CD14-positive monocyte (primary cell): ENCODE measurements at regions of chr14 and their contacts with region 1.

Region 1: DNA sequence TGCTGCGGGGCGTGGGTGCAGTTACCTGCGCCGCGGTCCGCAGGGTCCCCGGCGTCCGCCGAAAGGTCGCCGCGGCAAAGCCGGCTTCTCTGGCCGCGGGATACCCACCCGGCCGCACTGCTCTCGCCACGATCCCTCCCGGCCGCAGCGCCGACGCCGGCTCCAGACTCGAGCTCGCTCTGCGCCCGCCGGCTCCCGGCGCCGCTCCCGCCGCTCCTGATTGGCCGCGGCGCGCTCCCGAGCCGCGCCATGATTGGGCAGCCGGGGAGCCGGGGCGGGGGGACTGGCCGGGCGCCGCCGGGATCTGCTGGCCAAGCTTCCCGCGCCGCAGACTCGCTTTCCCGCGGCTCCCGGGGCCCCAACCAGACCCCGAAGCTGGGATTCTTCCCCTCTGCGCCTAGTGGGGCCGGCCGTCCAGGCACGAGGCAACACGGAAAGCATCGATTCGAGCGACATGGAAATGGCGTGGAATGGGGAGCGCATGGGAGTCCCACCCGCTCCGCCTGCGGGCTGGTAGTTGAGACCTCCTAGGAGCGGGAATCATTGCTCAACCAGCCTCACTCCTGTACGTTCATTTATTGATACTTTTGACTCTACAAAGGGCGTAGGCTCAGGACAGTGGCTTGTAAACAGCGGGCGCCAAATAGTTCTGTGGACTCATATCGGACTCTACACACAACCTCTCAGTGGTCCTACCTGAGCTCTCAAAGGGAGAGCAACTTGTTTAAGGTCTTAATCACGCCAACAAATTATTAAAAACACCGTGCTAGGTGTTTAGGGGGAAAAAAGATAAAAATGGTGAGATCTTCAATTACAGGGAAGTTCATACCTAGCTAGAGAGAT is 36.4 kb upstream of the STON2 start:
- DNase-seq: peak; percentile 29 to 65 (median 62)
- H3K4me3 ChIP-seq: peak overlapping the region; percentile 40 to 76 (median 49)
- H3K4me3 Mint-ChIP-seq: peak overlapping the region; percentile 72 to 89
- H3K27ac ChIP-seq: no peak overlapping the region
- H3K27ac Mint-ChIP-seq: no peak overlapping the region
- H3K4me1 ChIP-seq: peaks cover 15 to 18% of the 10 kb centered on the region in 2 donors
- H3K4me1 Mint-ChIP-seq: peaks cover 14% of the 10 kb centered on the region
- H3K27me3 ChIP-seq: peaks cover 84 to 86% of the 10 kb centered on the region in 2 donors
- H3K27me3 Mint-ChIP-seq: peaks cover 79 to 89% (median 80%) of the 10 kb centered on the region in 3 donors
- CTCF ChIP-seq: no peak

Region 2: DNA sequence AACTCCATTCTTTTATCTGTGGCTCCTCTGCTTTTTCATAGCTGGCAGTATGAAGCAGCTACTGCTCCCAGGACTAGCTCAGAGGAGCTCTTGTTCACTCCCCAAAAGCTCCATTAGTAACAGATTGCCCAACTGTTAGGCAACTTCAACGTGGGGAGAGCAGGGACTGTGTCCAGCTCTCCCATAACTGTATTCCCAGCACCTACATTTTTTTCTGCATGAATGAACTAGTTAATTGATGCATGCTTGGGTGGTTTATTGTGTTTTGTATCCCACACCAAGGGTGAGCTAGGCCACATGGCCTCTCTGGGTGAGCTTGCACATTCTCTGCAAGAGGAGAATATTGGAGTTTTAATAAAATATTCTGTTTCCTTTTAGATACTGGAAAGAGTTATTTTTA is 51.6 kb before region 1 on chr14:
- intact Hi-C with region 1: loop called (anchors 10 kb)
- DNase-seq: no peak
- H3K4me3 ChIP-seq: no peak overlapping the region
- H3K4me3 Mint-ChIP-seq: no peak overlapping the region
- H3K27ac ChIP-seq: no peak overlapping the region
- H3K27ac Mint-ChIP-seq: no peak overlapping the region
- H3K4me1 ChIP-seq: no peaks in the 10 kb centered on the region
- H3K4me1 Mint-ChIP-seq: peaks cover 6% of the 10 kb centered on the region
- H3K27me3 ChIP-seq: peaks cover 2 to 16% of the 10 kb centered on the region in 2 donors
- H3K27me3 Mint-ChIP-seq: peaks cover 3 to 29% (median 25%) of the 10 kb centered on the region in 3 donors
- CTCF ChIP-seq: no peak